OCI-LY7 (cell line): ENCODE measurements at regions of chr17 and their contacts with region 1.

Region 1: DNA sequence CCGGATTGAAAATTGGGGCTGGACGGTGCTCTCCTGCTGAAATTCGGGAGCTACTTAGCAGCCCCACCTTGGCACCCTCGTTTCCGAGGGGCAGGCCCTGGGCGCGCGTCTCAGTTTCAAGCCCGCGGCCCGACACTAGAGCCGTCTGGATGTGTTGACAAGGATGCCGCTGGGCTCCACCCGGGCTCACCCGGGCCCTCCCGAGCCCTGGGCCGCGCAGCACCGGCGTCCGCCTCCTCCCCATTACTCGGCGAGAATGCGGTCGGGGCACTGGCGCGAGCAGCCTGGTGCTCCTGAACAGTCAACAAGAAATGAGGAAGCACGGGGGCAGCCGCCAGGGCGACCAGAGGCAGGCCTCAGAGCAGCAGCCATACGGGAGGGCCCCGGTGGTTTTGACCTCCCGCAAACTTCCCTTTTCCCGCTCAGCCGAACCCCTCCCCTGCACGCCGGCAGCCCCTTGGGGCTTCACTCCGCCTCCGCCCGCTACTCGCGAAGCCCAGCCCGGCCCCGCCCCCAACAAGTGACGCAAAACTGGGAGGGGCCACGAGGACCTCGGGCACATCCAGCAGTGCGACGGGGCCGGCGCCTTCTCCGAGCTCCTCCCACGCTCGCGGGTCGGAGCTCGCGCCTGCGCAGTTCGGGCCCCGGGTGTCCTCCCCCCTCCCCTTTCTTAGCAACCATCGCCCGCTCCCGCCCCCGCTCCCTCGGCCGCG is 447 bp upstream of the SEC14L1 start:
- DNase-seq: peak; percentile 100
- H3K4me3 ChIP-seq: peak overlapping the region; percentile 93
- H3K27ac ChIP-seq: peak overlapping the region; percentile 86
- H3K4me1 ChIP-seq: peaks cover 37% of the 10 kb centered on the region
- CTCF ChIP-seq: no peak

Region 2: GRCh38 chr17:76737082-76737675 is 403.1 kb before region 1 on chr17 and contains the start of gene SRSF2:
- CTCF ChIA-PET with region 1: no interaction called
- POLR2A ChIA-PET with region 1: interaction called, 3 read pairs
- intact Hi-C with region 1: loop called (anchors 5 kb)
- DNase-seq: peak; percentile 100
- H3K4me3 ChIP-seq: peak within 1 kb of the TSS; percentile 77
- H3K27ac ChIP-seq: peak within 1 kb of the TSS; percentile 92
- H3K4me1 ChIP-seq: peaks cover 53% of the 10 kb centered on the region
- CTCF ChIP-seq: no peak
- total RNA-seq, gene SRSF2: 1,143 and 2,207 TPM in 2 replicates

Region 3: DNA sequence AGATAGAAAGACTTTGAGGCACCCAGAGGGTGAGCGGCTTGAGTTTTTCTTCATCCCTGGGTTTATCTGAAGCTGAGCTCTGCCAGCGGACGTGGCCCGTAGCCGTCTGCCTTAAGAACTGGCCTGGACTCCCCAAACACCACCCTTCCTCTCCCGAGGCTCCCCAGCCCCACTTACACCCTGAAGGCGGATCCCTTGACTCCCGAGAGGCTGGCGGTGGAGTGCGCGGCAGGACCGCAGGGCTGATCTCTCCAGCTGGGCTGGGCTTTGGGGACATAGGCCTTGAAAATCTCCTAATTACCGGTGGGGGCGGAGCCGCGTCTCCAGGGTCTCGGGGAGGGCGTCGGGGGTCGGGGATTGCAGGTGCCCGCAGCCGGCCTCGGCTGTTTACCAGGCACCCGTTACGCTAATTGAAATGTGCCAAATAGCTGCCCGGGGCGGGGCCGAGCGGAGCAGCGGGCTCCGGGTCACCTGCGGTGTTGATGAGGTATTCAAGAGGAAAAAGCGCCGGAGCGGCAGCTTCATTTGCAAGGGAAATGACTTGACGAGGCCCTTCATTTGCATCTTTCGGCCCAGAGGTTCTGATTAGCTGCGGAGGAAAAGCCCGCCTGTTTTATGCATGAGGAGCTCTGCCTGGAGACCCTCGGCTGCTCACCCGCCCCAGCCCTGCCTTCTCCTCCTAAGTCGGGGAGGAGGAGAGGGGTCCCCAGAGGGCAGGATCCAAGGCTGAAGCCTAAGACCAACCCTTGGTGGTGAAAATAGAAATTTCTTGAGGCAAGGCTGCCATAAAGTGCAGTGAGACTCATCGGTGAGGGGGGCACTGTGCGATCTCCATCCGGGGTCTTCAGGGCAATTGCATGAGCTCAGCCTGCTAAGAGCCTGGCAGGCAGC is 171.4 kb before region 1 on chr17:
- CTCF ChIA-PET with region 1: no interaction called
- POLR2A ChIA-PET with region 1: no interaction called
- intact Hi-C with region 1: loop called (anchors 2 kb)
- DNase-seq: peak; percentile 100
- H3K4me3 ChIP-seq: peak overlapping the region; percentile 76
- H3K27ac ChIP-seq: peak overlapping the region; percentile 86
- H3K4me1 ChIP-seq: peaks cover 44% of the 10 kb centered on the region
- CTCF ChIP-seq: peak; percentile 43; the same call in 1 of the 2 replicates

Region 4: DNA sequence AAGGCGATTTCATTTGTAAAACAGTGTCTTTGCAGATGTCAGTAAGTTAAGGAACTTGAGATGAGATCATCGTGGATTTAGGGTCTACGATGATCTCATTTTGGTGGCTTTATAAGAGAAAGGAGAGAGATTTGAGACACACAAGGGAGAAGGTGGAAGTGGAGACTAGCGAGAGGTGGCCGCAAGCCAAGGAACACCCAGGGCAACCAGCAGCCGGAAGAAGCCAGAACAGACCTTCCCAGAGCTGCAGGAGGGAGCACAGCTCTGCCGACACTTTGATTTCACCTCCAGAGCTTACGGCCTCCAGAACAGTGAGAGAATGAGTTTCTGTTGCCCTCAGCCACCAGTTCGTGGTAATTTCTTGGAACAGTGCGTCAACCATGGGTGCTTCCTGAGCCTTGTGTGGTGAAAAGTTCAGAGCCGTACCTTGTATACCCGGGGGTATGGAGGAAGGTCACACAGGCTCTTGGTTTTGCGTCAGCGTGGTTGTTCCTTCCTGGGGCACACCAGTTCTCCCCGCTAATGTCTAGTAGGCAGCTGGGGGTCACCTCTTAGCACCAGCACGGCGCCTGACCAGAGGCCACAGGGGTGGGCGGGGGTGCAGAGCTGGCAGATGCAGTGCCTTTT is 12.5 kb before region 1 on chr17:
- CTCF ChIA-PET with region 1: no interaction called
- POLR2A ChIA-PET with region 1: interaction called, 11 read pairs
- intact Hi-C with region 1: no loop called
- DNase-seq: no peak
- H3K4me3 ChIP-seq: no peak overlapping the region
- H3K27ac ChIP-seq: no peak overlapping the region
- H3K4me1 ChIP-seq: peaks cover 7% of the 10 kb centered on the region
- CTCF ChIP-seq: no peak

Region 5: GRCh38 chr17:77319211-77320043 is 179.1 kb after region 1 on chr17:
- CTCF ChIA-PET with region 1: no interaction called
- POLR2A ChIA-PET with region 1: no interaction called
- intact Hi-C with region 1: loop called (anchors 2 kb)
- DNase-seq: peak; percentile 57
- H3K4me3 ChIP-seq: no peak overlapping the region
- H3K27ac ChIP-seq: peak overlapping the region; percentile 25
- H3K4me1 ChIP-seq: peaks cover 76% of the 10 kb centered on the region
- CTCF ChIP-seq: no peak

Region 6: DNA sequence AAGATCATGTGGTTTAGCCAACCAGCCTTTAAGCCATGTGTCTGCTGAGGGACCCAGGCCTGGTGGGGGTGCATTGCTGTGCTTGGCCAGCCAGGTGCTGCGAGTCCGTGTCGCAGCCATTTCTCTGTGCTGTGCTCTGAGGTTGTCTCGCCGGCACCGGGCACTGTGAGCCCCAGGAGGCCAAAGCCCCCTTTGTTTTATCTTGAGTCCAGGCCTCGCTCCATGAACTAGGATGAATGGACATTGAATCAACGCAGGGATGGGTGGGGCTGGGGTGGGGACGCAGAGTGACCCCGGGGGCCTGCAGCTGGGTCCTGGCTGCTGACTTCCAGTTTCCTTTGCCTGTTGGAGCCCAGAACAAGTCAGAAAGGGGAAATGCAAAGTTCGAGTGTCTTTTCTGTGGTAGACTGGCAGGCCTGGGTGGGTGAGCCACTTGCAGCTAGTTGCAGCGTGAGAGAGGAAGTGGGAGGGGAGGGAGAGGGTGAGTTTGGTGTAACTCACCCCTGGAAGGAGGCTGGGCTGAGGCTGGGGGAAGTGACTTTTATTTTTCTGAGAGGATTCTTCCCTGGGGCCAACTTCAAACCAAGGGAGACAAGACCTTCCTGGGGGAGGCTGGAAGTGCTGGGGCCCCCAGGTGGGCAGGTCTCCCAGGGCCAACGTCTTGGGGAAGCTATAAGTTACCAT is 325.2 kb after region 1 on chr17:
- CTCF ChIA-PET with region 1: no interaction called
- POLR2A ChIA-PET with region 1: interaction called, 3 read pairs
- intact Hi-C with region 1: loop called (anchors 5 kb)
- DNase-seq: peak; percentile 96
- H3K4me3 ChIP-seq: peak overlapping the region; percentile 52
- H3K27ac ChIP-seq: peak overlapping the region; percentile 95
- H3K4me1 ChIP-seq: peaks cover 97% of the 10 kb centered on the region
- CTCF ChIP-seq: no peak